MCF 10A (cell line): ENCODE measurements at regions of chr12 and their contacts with region 1.

Region 1: DNA sequence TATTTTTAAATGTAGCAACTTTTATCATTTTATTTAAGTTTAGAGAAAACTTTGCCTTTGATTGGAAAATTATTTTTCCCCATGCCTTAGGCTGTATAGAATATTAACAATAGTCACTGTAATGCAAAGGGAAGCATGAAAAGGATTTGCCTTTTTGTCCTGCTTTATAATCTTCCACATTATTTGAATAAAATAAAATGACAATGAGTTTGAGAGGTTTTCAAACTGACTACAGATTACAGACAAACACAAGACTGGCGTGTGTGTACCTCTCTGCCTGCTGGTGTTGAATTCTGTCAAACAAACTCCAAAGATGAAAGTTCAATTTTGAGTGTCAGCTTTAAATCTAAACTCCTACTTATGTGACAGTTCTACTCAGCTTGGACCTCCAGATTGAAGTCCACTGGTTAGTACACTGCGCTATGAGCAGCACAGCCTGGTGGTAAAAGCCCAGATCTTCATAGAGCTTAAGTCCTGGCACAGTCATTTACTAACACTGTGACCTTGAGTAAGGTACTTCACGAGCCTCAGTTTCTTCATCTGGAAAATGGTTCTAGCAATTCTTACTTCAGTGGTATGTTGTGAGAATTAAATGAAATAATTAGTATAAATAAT is 98.3 kb upstream of the CPNE8 start:
- DNase-seq: no peak
- H3K4me3 Mint-ChIP-seq: no peak overlapping the region
- H3K27ac Mint-ChIP-seq: no peak overlapping the region
- H3K4me1 Mint-ChIP-seq: no peaks in the 10 kb centered on the region
- H3K27me3 Mint-ChIP-seq: no peaks in the 10 kb centered on the region
- CTCF ChIP-seq: no peak

Region 2: DNA sequence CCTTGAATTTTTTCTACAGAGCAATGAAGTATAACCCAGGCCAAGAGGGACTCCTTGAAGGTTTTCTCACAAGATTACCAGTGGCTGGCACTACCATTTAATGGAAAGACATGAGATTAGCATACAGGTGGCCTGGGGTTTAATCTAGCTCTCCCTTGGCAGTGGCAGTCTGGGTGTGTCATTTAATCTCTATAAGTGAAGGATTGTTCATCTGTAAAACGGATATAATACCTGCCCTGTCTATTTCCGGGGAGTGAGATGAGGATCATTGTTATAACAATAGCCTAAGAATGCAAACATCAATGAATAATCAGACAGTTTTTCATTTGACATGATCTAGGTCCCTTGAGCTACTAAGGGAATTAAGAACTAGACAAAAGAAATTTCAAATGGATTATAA is 70.4 kb after region 1 on chr12:
- CTCF ChIA-PET with region 1: no interaction called
- POLR2A ChIA-PET with region 1: no interaction called
- intact Hi-C with region 1: loop called (anchors 10 kb)
- DNase-seq: no peak
- H3K4me3 Mint-ChIP-seq: no peak overlapping the region
- H3K27ac Mint-ChIP-seq: no peak overlapping the region
- H3K4me1 Mint-ChIP-seq: peaks cover 12% of the 10 kb centered on the region
- H3K27me3 Mint-ChIP-seq: no peaks in the 10 kb centered on the region
- CTCF ChIP-seq: no peak

Region 3: DNA sequence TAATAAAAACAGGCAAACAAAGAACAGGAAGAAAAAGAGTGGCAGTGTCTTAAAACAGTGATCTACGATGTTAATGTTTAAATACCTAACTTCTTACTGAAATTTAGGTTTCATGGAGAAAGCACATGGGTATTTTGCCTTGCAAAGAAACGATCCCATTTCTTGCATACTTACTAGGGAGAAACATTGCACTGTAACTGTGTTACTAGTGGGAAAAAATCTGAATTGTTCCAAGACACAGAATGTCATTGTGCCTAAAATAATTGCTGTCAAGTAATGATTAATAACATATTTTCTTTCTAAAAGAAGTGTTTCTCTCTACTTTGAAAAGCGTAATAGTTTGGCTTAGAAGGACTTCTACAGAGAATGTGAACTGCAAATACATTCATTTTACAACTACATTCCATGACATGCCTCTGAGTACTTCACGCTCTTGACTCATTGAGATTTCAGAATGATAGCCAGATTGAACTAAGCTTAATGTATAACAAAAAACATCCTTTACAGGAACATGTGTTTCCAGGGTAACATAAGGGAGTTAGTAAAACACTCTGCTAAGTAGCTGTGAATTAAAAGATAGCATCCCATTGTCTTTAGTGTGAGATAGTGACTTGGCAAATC is 157.9 kb after region 1 on chr12:
- CTCF ChIA-PET with region 1: no interaction called
- POLR2A ChIA-PET with region 1: no interaction called
- intact Hi-C with region 1: no loop called
- DNase-seq: no peak
- H3K4me3 Mint-ChIP-seq: no peak overlapping the region
- H3K27ac Mint-ChIP-seq: no peak overlapping the region
- H3K4me1 Mint-ChIP-seq: no peaks in the 10 kb centered on the region
- H3K27me3 Mint-ChIP-seq: no peaks in the 10 kb centered on the region
- CTCF ChIP-seq: no peak